BJ (cell line): ENCODE measurements at regions of chr12 and their contacts with region 1.

Region 1: GRCh38 chr12:93825931-93826555 is 148.9 kb downstream of the CRADD start:
- DNase-seq: peak; percentile 57
- H3K4me3 ChIP-seq: no peak overlapping the region
- H3K27me3 ChIP-seq: no peaks in the 10 kb centered on the region
- CTCF ChIP-seq: no peak

Region 2: GRCh38 chr12:93722835-93723538 is 103.1 kb before region 1 on chr12:
- CTCF ChIA-PET with region 1: no interaction called
- POLR2A ChIA-PET with region 1: no interaction called
- DNase-seq: no peak
- H3K4me3 ChIP-seq: no peak overlapping the region
- H3K27me3 ChIP-seq: no peaks in the 10 kb centered on the region
- CTCF ChIP-seq: no peak

Region 3: DNA sequence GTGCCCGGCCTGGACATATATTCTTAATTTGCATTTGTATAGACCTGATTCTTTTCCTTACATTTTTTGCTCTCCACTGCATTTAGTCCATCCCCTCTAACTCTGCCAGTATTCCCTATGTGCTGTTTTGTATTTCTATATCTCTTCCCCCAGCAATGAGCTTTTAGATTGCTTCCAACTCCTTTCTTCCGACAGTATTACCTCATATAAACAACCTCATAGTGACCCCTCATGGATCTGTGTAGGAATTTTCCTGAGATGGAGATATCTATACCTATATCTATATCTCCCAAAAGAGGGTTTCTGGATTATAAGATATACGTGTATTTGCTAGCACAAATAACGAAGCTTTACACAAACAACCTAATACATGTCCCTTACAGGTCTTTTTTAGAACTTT is 13.0 kb after region 1 on chr12:
- CTCF ChIA-PET with region 1: interaction called, 3 read pairs
- POLR2A ChIA-PET with region 1: interaction called, 24 read pairs
- DNase-seq: no peak
- H3K4me3 ChIP-seq: no peak overlapping the region
- H3K27me3 ChIP-seq: no peaks in the 10 kb centered on the region
- CTCF ChIP-seq: no peak

Region 4: DNA sequence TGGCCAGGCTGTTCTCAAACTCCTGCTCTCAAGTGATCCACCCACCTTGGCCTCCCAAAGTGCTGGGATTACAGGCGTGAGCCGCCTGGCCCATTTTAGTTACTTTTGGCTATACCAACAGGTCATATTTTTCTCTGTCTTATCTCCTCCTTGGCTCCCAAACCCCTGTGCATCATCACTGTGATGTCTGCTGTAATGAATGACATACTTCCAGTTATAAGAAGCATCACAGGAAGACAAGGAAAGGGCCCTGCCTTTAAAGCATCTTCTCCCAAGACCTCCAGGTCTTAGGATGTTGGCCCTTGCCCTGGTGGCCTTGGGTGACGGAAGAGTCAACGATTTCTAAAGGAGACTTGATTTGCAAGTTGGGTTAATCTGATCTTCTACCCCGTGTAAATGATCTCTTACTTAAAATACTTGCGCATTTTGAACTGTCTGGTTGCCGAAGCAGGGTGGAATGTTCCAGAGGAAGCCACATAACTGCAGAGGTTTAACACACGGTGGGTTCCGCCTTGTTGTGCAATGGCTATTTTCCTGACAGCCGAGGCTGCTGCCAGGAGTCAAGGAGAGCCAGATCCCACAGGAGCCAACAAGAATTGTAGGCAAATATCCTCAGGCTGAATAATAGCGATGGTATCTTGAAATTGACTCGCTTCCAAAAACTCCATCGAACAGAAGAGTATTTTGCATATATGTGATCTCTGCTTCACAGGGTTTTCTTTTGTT is 266.6 kb after region 1 on chr12:
- CTCF ChIA-PET with region 1: no interaction called
- POLR2A ChIA-PET with region 1: no interaction called
- DNase-seq: no peak
- H3K4me3 ChIP-seq: no peak overlapping the region
- H3K27me3 ChIP-seq: no peaks in the 10 kb centered on the region
- CTCF ChIP-seq: no peak